ENCODE measurements at regions of chr3 and their contacts with region 1.

Region 1: DNA sequence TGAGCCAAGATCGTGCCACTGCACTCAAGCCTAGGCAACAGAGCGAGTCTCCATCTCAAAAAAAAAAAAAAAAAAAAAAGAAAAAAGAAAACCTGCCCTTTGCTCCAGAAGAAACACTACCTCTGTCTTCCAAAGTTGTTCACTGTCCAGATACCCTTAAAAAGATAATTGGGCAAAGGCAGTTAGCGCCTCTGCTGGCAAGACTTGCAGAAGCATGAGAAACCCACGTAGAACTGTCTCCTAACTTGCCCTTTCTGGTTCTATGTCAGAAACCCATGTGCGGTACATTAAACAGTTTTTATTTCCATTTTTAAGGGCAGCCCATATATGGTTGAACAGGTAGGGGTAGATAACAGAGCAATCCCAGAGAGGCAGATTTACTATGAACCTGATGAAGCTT is 1026.4 kb downstream of the ROBO2 start:
- DNase-seq: no peak
- H3K4me3 ChIP-seq: no peak overlapping the region
- H3K27ac ChIP-seq: no peak overlapping the region
- H3K4me1 ChIP-seq: no peaks in the 10 kb centered on the region
- H3K27me3 ChIP-seq: no peaks in the 10 kb centered on the region
- CTCF ChIP-seq: no peak
- POLR2A ChIP-seq: no peak

Region 2: GRCh38 chr3:78025916-78026315 is 40.4 kb before region 1 on chr3:
- CTCF ChIA-PET with region 1: no interaction called
- POLR2A ChIA-PET with region 1: no interaction called
- dilution Hi-C with region 1: no loop called
- intact Hi-C with region 1: no loop called
- DNase-seq: no peak
- H3K4me3 ChIP-seq: no peak overlapping the region
- H3K27ac ChIP-seq: no peak overlapping the region
- H3K4me1 ChIP-seq: no peaks in the 10 kb centered on the region
- H3K27me3 ChIP-seq: no peaks in the 10 kb centered on the region
- CTCF ChIP-seq: no peak
- POLR2A ChIP-seq: no peak

Region 3: GRCh38 chr3:78090382-78090781 is 24.1 kb after region 1 on chr3:
- CTCF ChIA-PET with region 1: interaction called, 3 read pairs
- POLR2A ChIA-PET with region 1: no interaction called
- dilution Hi-C with region 1: no loop called
- intact Hi-C with region 1: loop called (anchors 1 kb)
- DNase-seq: no peak
- H3K4me3 ChIP-seq: no peak overlapping the region
- H3K27ac ChIP-seq: no peak overlapping the region
- H3K4me1 ChIP-seq: no peaks in the 10 kb centered on the region
- H3K27me3 ChIP-seq: no peaks in the 10 kb centered on the region
- CTCF ChIP-seq: no peak
- POLR2A ChIP-seq: no peak